ENCODE measurements at regions of chr5 and their contacts with region 1.

Region 1: GRCh38 chr5:36739751-36740221 is 133.4 kb downstream of the SLC1A3 start:
- DNase-seq: peak; percentile 51 to 62 (median 59)
- H3K4me3 ChIP-seq: no peak overlapping the region
- H3K4me3 Mint-ChIP-seq: no peak overlapping the region
- H3K27ac ChIP-seq: no peak overlapping the region
- H3K27ac Mint-ChIP-seq: no peak overlapping the region
- H3K4me1 ChIP-seq: peaks cover 11% of the 10 kb centered on the region
- H3K4me1 Mint-ChIP-seq: peaks cover 0 to 9% (median 4%) of the 10 kb centered on the region in 4 donors
- H3K27me3 ChIP-seq: peaks cover 9% of the 10 kb centered on the region
- H3K27me3 Mint-ChIP-seq: peaks cover 23 to 40% of the 10 kb centered on the region in 2 donors

Region 2: GRCh38 chr5:37005946-37006540 is 266.3 kb after region 1 on chr5:
- CTCF ChIA-PET with region 1: interaction called, 16 read pairs
- POLR2A ChIA-PET with region 1: no interaction called
- intact Hi-C with region 1: loop called (anchors 2 kb)
- DNase-seq: peak in 1 of 5 donors; percentile 6
- H3K4me3 ChIP-seq: no peak overlapping the region
- H3K4me3 Mint-ChIP-seq: no peak overlapping the region
- H3K27ac ChIP-seq: no peak overlapping the region
- H3K27ac Mint-ChIP-seq: no peak overlapping the region
- H3K4me1 ChIP-seq: no peaks in the 10 kb centered on the region
- H3K4me1 Mint-ChIP-seq: no peaks in the 10 kb centered on the region
- H3K27me3 ChIP-seq: no peaks in the 10 kb centered on the region
- H3K27me3 Mint-ChIP-seq: no peaks in the 10 kb centered on the region